ENCODE measurements at regions of chr2 and their contacts with region 1.

Region 1: GRCh38 chr2:38740851-38741731 is 10.1 kb downstream of the SRSF7 start:
- DNase-seq: peak; percentile 67
- ATAC-seq: peak; percentile 54

Region 2: DNA sequence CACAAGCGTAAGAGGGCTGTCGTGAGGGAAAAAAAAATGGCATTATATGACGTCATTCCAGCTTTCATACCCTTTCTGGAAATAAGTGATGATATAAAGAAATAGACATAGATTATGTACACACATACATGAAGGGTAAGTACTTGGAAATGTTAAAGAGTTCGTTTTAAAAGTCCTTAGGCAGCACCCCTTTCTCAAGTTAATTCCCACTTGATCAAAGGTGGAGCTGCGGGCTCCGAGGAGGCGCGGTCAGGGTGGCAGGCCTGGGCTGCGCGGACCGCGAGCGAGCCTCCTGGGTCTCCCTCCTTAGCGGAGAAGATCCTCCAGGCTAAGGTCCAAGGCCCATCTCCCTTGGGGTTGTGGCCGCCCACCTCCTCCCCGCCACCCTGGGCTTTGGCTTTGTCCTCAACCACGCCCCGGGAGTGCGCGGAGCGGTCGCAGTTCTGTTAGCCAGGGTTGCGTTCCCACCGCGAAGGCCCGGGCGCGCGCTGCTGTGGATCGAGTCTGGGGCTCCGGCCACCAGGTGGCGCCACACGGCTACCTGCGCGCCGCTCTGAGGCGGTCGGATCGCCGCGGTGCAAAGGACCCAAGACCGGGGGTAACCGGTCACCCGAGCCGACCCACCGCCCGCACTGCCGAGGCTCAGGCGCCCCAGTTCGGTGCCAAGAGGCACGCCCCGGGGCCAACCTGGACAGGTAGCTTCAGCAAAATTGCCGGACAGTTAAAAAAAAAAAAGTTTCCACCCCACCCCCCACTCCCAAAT is 205.2 kb before region 1 on chr2:
- intact Hi-C with region 1: loop called (anchors 5 kb)
- DNase-seq: peak; percentile 92
- ATAC-seq: peak; percentile 96

Region 3: DNA sequence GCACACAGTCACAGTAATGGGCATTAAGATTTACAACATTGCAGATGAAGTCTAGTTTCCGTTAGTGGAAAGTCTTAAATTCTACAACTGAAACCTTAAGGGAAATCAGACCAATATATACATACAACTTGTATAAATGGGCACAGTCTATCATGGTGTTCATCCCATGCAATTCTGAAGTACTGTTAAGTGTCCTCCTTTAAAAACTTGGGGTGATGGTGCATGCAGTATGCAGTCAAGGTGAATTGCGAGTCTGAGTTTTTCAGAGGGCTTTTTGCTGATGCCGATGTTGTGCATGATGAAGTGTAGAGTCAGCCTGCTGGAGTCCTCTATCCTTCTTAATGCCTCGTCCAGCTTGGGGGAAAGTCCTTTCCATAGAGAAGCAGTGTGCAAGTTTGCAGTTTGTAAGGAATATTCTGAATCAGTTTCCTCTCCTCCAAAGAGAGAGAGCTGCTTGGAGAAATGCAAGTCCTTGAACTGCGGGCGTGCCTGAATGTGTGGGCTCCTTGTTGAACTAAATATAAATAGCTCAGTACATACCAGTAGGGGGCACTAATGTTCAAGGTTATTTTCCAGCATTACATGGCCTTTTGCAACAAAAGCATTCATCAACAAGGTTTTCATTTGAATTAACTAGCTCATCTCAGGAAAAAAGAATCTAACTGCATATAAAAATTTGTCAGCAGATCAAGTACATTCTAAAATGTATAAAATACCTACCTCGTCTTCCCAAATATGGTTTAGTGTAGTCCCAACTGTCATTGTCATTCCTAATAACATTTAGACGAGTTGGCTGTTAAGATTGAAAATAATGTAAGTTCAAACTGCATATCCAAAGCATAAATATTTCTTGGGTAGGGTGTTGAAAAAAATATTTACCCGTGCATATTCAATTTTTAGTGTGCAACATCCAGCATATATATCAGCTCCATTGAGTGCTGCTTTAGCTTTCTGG is 159.6 kb before region 1 on chr2:
- intact Hi-C with region 1: loop called (anchors 5 kb)
- DNase-seq: no peak
- ATAC-seq: peak; percentile 88

Region 4: DNA sequence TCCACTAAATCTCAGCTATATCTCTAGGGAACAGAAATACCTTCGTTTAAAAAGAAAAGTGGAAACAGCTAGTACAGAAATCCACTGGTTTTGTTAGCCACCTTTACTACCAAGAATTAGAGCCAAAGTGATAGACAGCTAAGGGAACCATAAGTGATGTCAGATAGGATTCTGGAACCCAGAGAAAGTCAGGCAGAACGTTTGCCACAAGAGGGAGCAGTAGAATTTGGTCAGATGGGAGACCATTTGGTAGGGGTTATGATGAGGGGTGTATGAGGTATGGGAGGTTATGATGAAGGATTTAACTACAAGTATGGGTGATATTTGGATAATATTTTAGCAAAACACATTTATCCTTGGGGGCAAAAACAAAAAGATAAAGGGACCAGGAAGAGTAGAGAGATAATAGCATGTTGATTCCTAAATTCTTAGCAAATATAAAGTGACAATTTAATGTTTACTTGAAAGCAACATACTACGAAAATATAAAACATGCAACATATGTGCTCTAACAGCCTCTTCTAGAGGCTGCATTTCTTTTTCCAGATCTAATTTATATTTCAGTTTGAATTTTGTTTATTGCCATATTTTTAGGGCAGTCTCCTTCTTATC is 1707.5 kb after region 1 on chr2:
- intact Hi-C with region 1: no loop called
- DNase-seq: no peak
- ATAC-seq: no peak

Measured in sciatic nerve (tissue), 2 donors.